ENCODE measurements at regions of chr6 and their contacts with region 1.

Region 1: GRCh38 chr6:18595774-18596530 is 208.8 kb downstream of the RNF144B start:
- DNase-seq: peak; percentile 66 to 78
- H3K4me3 ChIP-seq: no peak overlapping the region
- H3K4me1 ChIP-seq: no peaks in the 10 kb centered on the region
- H3K27me3 ChIP-seq: no peaks in the 10 kb centered on the region

Region 2: DNA sequence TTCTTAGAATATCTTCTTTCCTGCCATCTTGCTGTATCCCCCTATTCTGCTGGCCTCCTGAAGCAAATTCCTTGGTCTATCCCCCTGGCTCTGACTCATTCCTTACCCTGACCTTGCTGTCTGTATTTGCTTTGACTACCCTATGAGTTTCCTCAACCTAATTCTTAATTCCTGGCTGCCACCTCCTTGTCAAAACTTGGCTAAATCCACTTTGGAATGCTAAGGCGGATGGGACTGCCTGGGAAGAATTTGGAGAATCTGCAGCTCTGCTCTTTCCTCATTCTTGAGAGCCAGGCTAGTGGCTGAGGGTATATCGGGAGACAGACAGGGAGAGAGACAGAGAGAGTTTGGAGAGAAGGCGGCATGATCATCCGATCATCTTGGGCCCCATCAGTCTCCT is 1178.1 kb before region 1 on chr6:
- in situ Hi-C with region 1: no loop called
- DNase-seq: peak in 1 of 2 experiments; percentile 15
- H3K4me3 ChIP-seq: no peak overlapping the region
- H3K4me1 ChIP-seq: peaks cover 9% of the 10 kb centered on the region; the same call in 1 of the 2 replicates
- H3K27me3 ChIP-seq: no peaks in the 10 kb centered on the region

Region 3: GRCh38 chr6:20056350-20056992 is 1460.5 kb after region 1 on chr6:
- in situ Hi-C with region 1: loop called (anchors 25 kb)
- DNase-seq: peak in 1 of 2 experiments; percentile 40
- H3K4me3 ChIP-seq: no peak overlapping the region
- H3K4me1 ChIP-seq: no peaks in the 10 kb centered on the region
- H3K27me3 ChIP-seq: no peaks in the 10 kb centered on the region